ENCODE measurements at regions of chr16 and their contacts with region 1.

Region 1: DNA sequence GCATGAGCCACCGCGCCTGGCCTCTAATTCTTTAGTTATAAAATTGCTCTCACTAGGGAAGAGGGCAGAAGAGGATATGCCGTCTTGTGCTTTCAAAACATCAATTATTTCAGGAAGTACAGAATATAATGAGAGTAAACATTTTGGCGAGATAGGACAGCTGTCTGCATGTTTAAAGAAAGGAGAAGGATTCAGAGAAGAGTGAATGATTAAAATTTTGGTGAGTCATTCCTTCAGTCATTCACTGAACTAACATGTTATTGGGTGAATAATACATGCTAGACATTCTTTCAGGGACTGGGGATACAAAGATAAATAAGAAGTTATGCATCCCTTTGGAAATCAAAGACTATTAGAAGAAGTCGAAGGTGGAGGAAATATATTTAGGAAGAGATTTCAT is 590.3 kb upstream of the GOT2 start:
- DNase-seq: no peak
- H3K4me3 ChIP-seq: no peak overlapping the region
- CTCF ChIP-seq: no peak
- POLR2A ChIP-seq: no peak

Region 2: GRCh38 chr16:59259950-59260319 is 64.5 kb before region 1 on chr16:
- intact Hi-C with region 1: loop called (anchors 10 kb)
- DNase-seq: no peak
- H3K4me3 ChIP-seq: no peak overlapping the region
- CTCF ChIP-seq: no peak
- POLR2A ChIP-seq: no peak